ENCODE measurements at regions of chr5 and their contacts with region 1.

Region 1: DNA sequence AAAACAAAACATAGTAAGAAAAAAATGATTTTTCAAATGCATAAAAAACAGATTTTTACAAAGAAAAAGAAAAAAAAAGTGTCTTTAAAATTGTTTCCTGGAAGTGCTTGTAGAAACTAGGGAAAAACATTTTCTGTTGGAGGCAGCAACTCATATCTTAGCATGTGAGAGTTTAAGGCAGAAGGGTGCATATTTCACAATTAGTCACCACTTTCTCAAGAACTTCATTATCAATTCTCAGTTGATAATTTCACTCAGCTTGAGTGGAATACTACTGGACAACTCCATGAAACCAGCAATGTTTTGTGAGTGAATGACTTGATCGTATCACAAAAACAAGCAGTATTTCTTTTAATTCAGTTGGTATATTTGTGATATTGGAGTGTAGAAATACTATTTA is 508.3 kb upstream of the DAB2 start:
- DNase-seq: no peak
- ATAC-seq: no peak
- H3K4me3 ChIP-seq: no peak overlapping the region
- H3K27ac ChIP-seq: no peak overlapping the region
- H3K4me1 ChIP-seq: no peaks in the 10 kb centered on the region
- H3K27me3 ChIP-seq: peaks cover 0 to 5% (median 0%) of the 10 kb centered on the region in 9 donors
- CTCF ChIP-seq: no peak
- POLR2A ChIP-seq: no peak

Region 2: GRCh38 chr5:39319395-39319794 is 613.7 kb before region 1 on chr5:
- intact Hi-C with region 1: no loop called
- DNase-seq: peak in 1 of 5 donors; percentile 21
- ATAC-seq: no peak
- H3K4me3 ChIP-seq: no peak overlapping the region
- H3K27ac ChIP-seq: no peak overlapping the region
- H3K4me1 ChIP-seq: no peaks in the 10 kb centered on the region
- H3K27me3 ChIP-seq: peaks cover 0 to 7% (median 0%) of the 10 kb centered on the region in 9 donors
- CTCF ChIP-seq: no peak
- POLR2A ChIP-seq: no peak

Region 3: DNA sequence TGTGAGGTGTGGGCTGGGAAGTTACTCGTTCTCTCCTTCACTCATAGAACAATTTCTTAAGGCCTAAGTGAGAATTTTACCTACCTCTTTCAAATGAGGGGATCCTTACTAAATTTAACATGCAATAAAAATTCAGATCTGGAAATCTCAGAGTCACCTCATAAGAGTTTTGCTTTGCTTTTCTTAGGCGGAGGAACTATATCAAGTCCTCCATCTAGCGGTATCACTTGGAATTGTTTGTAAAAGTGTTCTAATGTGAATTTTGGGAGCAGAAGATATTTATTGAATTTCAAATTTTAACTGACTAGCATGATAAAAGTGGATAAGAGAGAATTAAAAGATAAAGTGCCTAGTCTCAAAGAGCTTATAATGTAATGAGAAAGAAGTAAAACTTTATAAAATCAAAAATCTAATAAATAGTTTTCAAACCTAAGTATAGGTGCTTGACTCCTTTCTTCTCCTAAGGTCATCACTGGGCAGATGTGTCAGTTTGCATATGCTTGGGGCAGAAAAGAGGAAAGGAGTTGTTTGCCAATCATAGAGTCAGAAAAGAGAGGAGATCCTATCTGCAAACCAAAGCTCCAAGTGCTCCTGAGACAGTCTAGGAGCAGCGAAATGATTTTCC is 362.5 kb before region 1 on chr5:
- intact Hi-C with region 1: no loop called
- DNase-seq: no peak
- ATAC-seq: no peak
- H3K4me3 ChIP-seq: no peak overlapping the region
- H3K27ac ChIP-seq: no peak overlapping the region
- H3K4me1 ChIP-seq: peaks cover 0 to 8% (median 0%) of the 10 kb centered on the region in 12 donors
- H3K27me3 ChIP-seq: peaks cover 0 to 8% (median 0%) of the 10 kb centered on the region in 9 donors
- CTCF ChIP-seq: peak; percentile 46 to 80 (median 67)
- POLR2A ChIP-seq: no peak

Region 4: GRCh38 chr5:39599721-39600431 is 333.2 kb before region 1 on chr5:
- intact Hi-C with region 1: loop called in 1 of 10 experiments (anchors 5 kb)
- DNase-seq: no peak
- ATAC-seq: no peak
- H3K4me3 ChIP-seq: no peak overlapping the region
- H3K27ac ChIP-seq: no peak overlapping the region
- H3K4me1 ChIP-seq: no peaks in the 10 kb centered on the region
- H3K27me3 ChIP-seq: no peaks in the 10 kb centered on the region
- CTCF ChIP-seq: peak; percentile 32 to 63 (median 42)
- POLR2A ChIP-seq: no peak

Region 5: DNA sequence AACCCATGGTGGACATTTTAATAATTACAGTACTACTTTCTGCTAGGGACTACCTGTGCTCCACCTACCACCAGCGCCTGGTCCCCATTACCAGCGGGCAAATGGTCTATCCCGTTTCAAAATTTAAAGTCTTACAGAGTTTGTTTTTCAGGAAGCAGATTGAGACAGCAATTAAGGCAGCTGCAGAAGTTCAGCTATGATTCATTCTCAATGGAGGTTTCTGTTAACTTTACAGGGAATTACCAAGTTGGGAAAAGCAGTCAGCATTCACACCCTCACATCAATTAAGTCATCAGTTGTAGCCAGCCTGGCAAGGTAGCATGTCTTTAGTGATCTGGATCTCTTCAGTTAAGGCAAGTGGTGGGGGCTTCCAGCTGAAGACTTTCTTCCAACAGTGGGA is 97.7 kb before region 1 on chr5:
- intact Hi-C with region 1: no loop called
- DNase-seq: no peak
- ATAC-seq: no peak
- H3K4me3 ChIP-seq: no peak overlapping the region
- H3K27ac ChIP-seq: no peak overlapping the region
- H3K4me1 ChIP-seq: no peaks in the 10 kb centered on the region
- H3K27me3 ChIP-seq: no peaks in the 10 kb centered on the region
- CTCF ChIP-seq: no peak
- POLR2A ChIP-seq: no peak

Region 6: GRCh38 chr5:39892708-39893107 is 40.4 kb before region 1 on chr5:
- intact Hi-C with region 1: no loop called
- DNase-seq: no peak
- ATAC-seq: no peak
- H3K4me3 ChIP-seq: no peak overlapping the region
- H3K27ac ChIP-seq: no peak overlapping the region
- H3K4me1 ChIP-seq: no peaks in the 10 kb centered on the region
- H3K27me3 ChIP-seq: no peaks in the 10 kb centered on the region
- CTCF ChIP-seq: no peak
- POLR2A ChIP-seq: no peak